Testis (tissue), 5 donors: ENCODE measurements at regions of chr6 and their contacts with region 1.

Region 1: DNA sequence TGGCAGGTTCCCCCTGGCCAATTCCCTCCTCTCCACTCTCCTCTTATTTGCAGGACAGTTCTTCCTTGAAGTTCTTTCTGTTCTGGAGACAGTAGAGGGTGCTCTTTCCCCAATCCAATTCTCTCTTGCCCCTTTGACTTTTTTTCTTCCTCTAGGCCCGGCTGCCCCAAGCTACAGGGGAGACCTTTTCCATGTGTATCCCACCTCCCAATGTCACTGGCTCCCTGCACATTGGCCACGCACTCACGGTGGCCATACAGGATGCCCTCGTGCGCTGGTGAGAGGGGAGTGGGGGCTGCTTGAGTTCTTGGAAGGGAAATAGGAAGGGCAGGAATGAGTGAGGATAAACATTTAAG is 1.5 kb downstream of the VARS2 start:
- DNase-seq: peak; percentile 31
- H3K4me3 ChIP-seq: no peak overlapping the region
- H3K27ac ChIP-seq: peak overlapping the region; percentile 92 to 93
- H3K4me1 ChIP-seq: peaks cover 22% of the 10 kb centered on the region
- H3K27me3 ChIP-seq: no peaks in the 10 kb centered on the region
- CTCF ChIP-seq: peak in 2 of 3 experiments; percentile 52 to 63
- POLR2A ChIP-seq: no peak

Region 2: DNA sequence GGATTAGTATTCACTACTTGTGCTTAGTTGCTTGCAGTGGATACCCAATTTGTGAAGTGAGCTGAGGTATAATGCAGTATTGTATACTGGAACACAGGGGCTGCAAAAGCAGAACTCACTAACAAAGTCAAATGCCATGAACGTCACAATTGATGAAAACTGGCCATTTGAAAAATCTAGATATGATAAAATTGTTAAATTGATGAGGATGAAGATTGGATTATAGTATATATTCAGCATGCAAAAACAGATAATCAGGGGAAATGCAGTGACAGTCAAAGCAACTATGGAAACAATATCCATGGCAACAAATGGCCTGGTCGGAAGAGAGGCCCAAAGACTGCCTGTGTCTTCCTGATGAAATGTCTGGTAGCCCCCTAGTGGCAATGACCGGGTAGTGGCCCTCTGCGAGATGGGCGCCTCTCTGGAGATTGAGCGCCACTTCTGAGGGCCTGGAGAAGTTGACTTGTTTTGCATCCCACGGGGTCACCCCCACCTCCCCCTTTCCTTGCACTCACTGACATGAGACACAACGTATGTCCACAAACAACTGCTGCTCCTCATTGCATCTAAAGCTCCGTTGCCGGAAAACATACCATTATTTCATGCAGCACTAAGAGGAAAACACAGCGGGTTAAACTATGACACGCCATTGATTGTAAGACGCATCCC is 153.2 kb after region 1 on chr6:
- intact Hi-C with region 1: loop called (anchors 5 kb)
- DNase-seq: peak; percentile 90
- H3K4me3 ChIP-seq: no peak overlapping the region
- H3K27ac ChIP-seq: no peak overlapping the region
- H3K4me1 ChIP-seq: no peaks in the 10 kb centered on the region
- H3K27me3 ChIP-seq: no peaks in the 10 kb centered on the region
- CTCF ChIP-seq: peak; percentile 76 to 95 (median 90)
- POLR2A ChIP-seq: no peak